ENCODE measurements at regions of chr1 and their contacts with region 1.

Region 1: DNA sequence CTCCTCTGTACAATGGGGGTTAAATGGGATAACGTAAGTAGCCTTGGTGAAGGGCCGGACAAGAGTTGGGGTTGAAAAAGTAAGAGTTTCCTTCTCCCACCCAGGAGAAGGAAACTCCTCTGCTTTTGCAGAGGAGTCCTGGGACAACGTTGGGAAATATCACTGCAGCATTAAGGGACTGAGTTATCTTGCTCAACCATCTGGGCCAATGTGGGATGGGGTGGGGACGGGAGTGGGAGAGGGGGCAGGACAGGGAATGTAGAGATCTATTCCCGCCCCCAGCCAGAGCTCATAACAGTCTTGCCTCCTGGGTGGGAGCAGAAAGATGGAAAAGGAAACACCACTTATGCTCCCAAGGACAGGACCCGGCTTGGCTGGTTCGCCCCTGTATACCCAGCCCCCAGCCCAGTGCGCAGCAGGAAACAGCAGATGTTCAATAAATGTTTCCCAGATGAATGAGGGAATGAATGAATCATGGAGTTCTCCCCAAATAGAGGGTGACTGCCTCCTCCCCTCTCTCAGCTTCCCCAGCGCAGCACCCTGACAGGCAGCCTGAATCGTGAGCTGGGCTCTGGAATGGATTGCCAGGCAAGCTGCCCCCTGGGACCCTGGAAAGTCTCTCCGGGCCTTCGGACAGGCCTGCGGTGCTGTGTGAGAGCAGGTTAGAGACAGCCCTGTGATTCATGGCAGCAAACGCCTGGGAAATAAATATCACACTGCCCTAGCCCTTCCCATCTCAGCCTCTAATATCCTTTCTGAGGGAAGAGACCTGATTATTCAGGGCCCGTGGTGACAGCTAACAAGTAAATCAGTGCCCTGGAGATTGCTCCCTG is 24.8 kb downstream of the FBXO2 start:
- DNase-seq: no peak
- ATAC-seq: no peak
- H3K4me3 ChIP-seq: no peak overlapping the region
- H3K27ac ChIP-seq: no peak overlapping the region
- H3K4me1 ChIP-seq: no peaks in the 10 kb centered on the region
- H3K27me3 ChIP-seq: peaks cover 0 to 57% (median 13%) of the 10 kb centered on the region in 9 donors
- CTCF ChIP-seq: no peak
- POLR2A ChIP-seq: no peak

Region 2: DNA sequence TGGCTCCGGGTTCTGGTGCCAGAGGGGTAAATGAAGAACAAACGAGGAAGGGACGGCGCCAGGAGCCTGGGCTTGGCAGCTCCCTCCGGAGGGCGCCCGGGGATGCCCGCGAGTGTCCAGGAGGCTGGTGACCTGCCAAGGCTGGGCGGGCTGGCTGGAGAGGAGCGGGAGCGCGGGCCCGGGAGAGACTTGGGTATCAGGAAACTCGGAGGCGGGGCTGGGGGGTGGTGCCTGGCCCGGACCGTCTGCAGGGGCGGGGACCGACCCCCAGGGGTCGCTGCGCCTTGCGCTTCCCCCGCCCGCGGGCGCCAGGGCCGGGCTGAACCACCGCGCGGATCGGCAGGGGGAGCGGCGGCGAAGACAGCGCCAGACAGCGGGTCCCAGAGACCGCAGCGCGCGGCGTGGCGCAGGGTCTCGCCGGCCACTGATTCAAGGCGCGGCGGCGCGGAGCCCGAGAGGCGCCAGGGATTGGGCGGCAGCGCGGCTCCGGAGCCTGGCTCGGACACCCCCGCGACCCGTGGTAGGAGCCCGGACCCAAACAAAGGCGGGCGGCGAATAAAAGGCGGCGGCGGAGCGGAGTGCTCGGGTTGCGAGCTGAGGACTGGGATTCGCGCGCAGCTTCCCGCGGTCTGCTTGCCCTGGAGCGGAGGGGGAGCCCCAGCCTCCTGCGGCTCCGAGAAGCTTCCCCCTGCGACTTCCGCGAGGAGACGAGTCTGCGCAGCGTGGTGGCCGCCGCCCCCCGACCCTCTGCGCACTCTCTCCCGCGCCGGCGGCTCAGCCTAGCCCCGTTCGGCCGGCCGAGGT is 150.6 kb before region 1 on chr1 and contains the start of gene DISP3:
- intact Hi-C with region 1: loop called in 2 of 10 experiments (anchors 10 kb)
- DNase-seq: peak; percentile 38 to 74 (median 56)
- ATAC-seq: peak; percentile 53 to 82 (median 78)
- H3K4me3 ChIP-seq: peak within 1 kb of the TSS; percentile 19 to 64 (median 56)
- H3K27ac ChIP-seq: no peak within 1 kb of the TSS
- H3K4me1 ChIP-seq: peaks cover 0 to 20% (median 15%) of the 10 kb centered on the region in 12 donors
- H3K27me3 ChIP-seq: peaks cover 14 to 83% (median 39%) of the 10 kb centered on the region in 9 donors
- CTCF ChIP-seq: peak; percentile 30 to 69 (median 54)
- POLR2A ChIP-seq: peak in 1 of 2 donors; percentile 32
- total RNA-seq, gene DISP3: 0.05 to 0.45 (median 0.17) TPM in 5 of 9 donors, not detected in the others

Region 3: GRCh38 chr1:11531314-11531870 is 98.0 kb before region 1 on chr1:
- intact Hi-C with region 1: no loop called
- DNase-seq: no peak
- ATAC-seq: no peak
- H3K4me3 ChIP-seq: no peak overlapping the region
- H3K27ac ChIP-seq: no peak overlapping the region
- H3K4me1 ChIP-seq: no peaks in the 10 kb centered on the region
- H3K27me3 ChIP-seq: peaks cover 0 to 5% (median 0%) of the 10 kb centered on the region in 9 donors
- CTCF ChIP-seq: no peak
- POLR2A ChIP-seq: no peak

Measured in heart left ventricle (tissue), 16 donors.